ENCODE measurements at regions of chr2 and their contacts with region 1.

Region 1: DNA sequence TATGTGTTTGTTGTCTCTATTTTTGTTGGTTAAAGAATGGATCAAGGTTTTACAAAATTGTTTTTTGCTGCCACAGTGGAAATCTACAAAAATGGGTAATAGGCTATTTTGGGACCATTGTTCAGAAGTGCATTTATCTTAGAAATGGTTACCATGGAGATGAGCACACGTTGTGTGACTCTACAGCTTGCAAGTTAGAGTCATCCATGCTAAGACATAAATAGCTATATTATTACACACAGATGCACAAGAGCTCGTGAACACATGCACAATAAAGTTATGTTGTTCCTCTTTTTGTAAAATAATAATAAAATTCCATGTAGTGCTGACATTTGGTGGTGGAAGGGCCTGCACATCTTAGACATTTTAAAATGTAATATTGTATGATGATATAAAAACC is 15.5 kb upstream of the DUSP19 start:
- H3K4me3 ChIP-seq: no peak overlapping the region
- H3K27ac ChIP-seq: no peak overlapping the region
- H3K4me1 ChIP-seq: no peaks in the 10 kb centered on the region
- CTCF ChIP-seq: no peak

Region 2: GRCh38 chr2:183093857-183094657 is 31.0 kb after region 1 on chr2:
- CTCF ChIA-PET with region 1: interaction called, 3 read pairs
- POLR2A ChIA-PET with region 1: interaction called, 10 read pairs
- H3K4me3 ChIP-seq: no peak overlapping the region
- H3K27ac ChIP-seq: no peak overlapping the region
- H3K4me1 ChIP-seq: no peaks in the 10 kb centered on the region
- CTCF ChIP-seq: no peak

Region 3: DNA sequence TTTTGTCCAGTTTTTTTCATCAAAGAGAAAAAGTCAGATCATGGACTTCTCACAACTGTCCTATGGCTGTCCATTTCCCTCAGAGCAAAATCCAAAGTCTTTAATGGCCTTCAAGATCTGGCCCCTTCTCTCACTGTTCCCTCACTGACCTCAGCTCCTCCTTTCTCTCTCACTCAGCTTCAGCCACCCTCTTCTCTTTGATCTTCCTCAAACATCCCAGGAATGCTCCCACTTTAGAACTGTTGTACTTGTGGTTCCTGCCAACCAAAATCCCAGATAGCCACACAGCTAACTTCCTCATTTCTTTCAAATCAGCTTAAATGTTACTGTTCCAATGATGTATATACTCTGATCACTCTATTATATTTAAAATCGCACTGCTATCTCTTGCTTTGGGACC is 144.0 kb after region 1 on chr2:
- CTCF ChIA-PET with region 1: no interaction called
- POLR2A ChIA-PET with region 1: no interaction called
- H3K4me3 ChIP-seq: no peak overlapping the region
- H3K27ac ChIP-seq: no peak overlapping the region
- H3K4me1 ChIP-seq: no peaks in the 10 kb centered on the region
- CTCF ChIP-seq: no peak